Esophagus squamous epithelium (tissue), 5 donors: ENCODE measurements at regions of chr20 and their contacts with region 1.

Region 1: DNA sequence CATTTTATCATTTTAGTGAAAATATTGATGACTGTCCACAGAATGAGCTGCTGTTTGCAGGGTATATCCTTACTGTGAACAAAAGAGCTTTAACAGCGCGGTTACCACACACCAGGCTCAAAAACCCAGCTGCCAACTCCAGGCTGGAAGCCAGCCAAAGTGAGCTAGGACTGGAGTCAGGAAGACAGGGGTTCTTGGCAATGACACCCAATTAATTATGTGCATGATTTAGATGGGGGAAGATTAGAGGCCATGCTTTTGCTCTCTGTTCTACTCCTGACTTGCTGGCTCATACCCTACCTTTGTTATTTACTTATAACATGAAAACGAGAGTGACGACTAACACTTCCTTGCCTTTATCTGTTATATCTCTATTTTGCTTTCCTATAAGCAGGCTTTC is 128.9 kb upstream of the SHLD1 start:
- DNase-seq: no peak
- H3K4me3 ChIP-seq: no peak overlapping the region
- H3K27ac ChIP-seq: peak overlapping the region in 1 of 4 donors; percentile 14
- H3K4me1 ChIP-seq: peaks cover 0 to 10% (median 4%) of the 10 kb centered on the region in 3 donors
- H3K27me3 ChIP-seq: no peaks in the 10 kb centered on the region
- CTCF ChIP-seq: no peak
- POLR2A ChIP-seq: no peak

Region 2: DNA sequence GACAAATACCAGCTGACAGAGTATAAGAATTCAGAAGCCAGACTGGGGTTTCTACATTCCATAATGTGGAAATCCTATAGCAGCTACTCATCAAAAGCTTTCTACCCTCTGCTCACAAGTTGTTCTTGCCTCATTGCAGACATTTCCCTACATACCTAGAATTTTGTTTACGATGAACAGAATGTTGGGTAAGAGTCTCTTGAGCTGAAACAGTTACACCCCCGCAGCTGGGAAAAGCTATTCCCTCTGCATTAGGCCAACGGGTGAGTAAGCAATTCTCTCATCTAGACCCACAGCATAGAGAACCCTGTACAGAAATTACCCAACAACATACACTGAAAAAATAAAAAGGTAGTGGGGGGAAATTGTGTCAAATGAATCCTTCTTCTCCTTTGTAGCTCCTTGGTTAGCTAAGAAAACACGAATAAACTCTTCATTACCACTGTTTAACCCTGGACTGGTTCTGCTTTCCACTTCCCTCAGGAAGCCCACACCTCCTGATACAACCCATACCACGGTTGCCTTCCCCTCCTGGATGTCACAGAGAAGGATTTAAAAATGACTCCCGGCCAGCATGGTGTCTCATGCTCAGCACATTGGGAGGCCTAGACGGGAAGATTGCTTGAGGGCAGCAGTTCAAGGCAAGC is 86.1 kb before region 1 on chr20:
- intact Hi-C with region 1: no loop called
- DNase-seq: no peak
- H3K4me3 ChIP-seq: no peak overlapping the region
- H3K27ac ChIP-seq: peak overlapping the region in 1 of 4 donors; percentile 33
- H3K4me1 ChIP-seq: peaks cover 0 to 4% (median 0%) of the 10 kb centered on the region in 3 donors
- H3K27me3 ChIP-seq: no peaks in the 10 kb centered on the region
- CTCF ChIP-seq: no peak
- POLR2A ChIP-seq: no peak

Region 3: DNA sequence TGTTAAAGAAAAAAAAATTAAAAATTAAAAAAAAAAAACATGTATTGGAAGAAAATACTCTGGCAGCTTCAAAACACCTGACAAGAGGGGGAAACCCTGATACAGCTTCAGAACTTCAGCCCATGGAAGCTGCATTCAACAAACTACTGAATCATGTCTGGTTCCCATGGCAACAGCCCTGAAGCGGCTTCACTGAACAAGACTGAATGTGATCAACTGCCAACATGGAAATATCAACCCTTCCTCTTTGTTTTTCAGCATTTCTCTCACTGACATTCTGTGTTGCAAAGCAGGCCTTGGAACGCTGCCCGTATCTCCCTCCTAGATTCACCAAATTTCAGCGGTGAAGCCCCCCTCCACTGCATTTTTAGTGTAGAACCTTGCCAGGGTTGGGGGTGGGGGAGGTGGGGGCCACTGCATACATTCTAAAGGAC is 37.6 kb after region 1 on chr20:
- intact Hi-C with region 1: loop called (anchors 5 kb)
- DNase-seq: no peak
- H3K4me3 ChIP-seq: peak overlapping the region in 1 of 4 donors; percentile 9
- H3K27ac ChIP-seq: peak overlapping the region; percentile 71 to 88 (median 84)
- H3K4me1 ChIP-seq: peaks cover 34 to 62% (median 38%) of the 10 kb centered on the region in 3 donors
- H3K27me3 ChIP-seq: no peaks in the 10 kb centered on the region
- CTCF ChIP-seq: no peak
- POLR2A ChIP-seq: no peak

Region 4: GRCh38 chr20:5674176-5674660 is 52.9 kb after region 1 on chr20:
- intact Hi-C with region 1: no loop called
- DNase-seq: no peak
- H3K4me3 ChIP-seq: no peak overlapping the region
- H3K27ac ChIP-seq: peak overlapping the region in 2 of 4 donors; percentile 14 to 30
- H3K4me1 ChIP-seq: peaks cover 0 to 19% (median 3%) of the 10 kb centered on the region in 3 donors
- H3K27me3 ChIP-seq: no peaks in the 10 kb centered on the region
- CTCF ChIP-seq: no peak
- POLR2A ChIP-seq: no peak